Tibial artery (tissue), 4 donors: ENCODE measurements at regions of chr17 and their contacts with region 1.

Region 1: DNA sequence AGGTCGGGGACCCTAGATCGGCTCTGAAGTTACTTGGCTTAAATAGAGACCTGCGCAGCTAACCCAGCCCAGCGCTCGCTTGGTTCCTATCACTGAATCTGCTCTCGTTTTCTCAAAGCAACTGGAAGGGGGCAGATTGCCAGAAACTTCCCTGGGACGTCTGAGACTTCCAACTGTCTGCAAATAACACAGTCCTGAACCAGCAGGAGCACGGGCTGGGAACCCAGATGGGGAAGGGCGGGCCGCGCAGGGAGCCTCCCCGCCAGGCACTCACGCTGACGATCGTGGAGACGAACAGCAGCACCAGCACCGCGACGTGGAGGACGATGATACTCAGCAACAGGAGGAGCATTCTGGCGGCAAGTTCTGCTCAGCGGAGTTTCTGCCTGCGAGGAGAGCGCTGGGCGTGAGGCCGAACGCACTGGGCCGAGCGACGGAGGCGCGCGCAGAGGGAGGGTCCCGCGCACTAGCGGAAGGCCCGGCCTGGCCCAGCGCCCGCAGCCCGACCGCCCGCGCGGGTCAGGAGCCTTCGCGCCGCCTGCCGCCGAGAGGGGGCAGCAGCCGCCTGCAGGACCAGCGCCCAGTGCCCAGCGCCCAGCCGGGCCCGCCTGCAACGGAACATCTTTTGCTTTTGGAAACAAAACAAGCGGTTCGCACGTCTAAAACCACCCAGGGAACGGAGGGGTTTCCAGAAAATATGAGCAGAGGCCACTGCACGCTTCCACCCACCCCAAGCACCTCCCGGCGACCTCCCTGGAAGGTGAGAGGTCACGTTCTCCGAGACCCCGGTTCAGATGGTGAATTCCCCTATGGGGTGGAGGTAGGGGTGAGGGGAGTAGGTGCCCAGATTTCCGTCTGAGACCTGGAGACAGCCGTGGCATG is 4.5 kb downstream of the PMP22 start:
- DNase-seq: peak; percentile 87 to 94
- H3K4me3 ChIP-seq: peak overlapping the region; percentile 74 to 88
- H3K27ac ChIP-seq: peak overlapping the region; percentile 98 to 99
- H3K4me1 ChIP-seq: peaks cover 0 to 50% (median 46%) of the 10 kb centered on the region in 4 donors
- H3K27me3 ChIP-seq: no peaks in the 10 kb centered on the region
- CTCF ChIP-seq: peak; percentile 85 to 94

Region 2: DNA sequence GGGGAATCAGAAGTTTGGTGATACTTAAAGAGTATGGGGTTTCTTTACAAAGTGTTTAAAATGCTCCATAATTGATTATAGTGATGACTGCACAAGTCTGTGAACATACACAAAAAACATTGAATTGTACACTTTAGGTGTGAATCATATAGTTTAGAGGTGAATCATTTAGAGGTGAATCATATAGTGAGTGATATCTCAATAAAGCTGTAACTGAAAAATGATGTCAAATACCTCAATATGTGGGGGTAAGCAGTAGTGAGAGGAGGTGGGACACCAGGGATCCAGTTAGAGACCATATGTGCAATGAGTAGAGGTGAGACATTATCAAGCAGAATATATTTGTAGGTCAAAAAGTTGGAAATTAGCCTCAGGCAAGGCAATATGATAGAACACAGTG is 260.0 kb before region 1 on chr17:
- intact Hi-C with region 1: no loop called
- DNase-seq: no peak
- H3K4me3 ChIP-seq: no peak overlapping the region
- H3K27ac ChIP-seq: no peak overlapping the region
- H3K4me1 ChIP-seq: no peaks in the 10 kb centered on the region
- H3K27me3 ChIP-seq: no peaks in the 10 kb centered on the region
- CTCF ChIP-seq: no peak

Region 3: GRCh38 chr17:15502369-15503112 is 241.9 kb after region 1 on chr17:
- intact Hi-C with region 1: loop called (anchors 1 kb)
- DNase-seq: peak; percentile 95
- H3K4me3 ChIP-seq: peak overlapping the region; percentile 37 to 49
- H3K27ac ChIP-seq: peak overlapping the region; percentile 65 to 69
- H3K4me1 ChIP-seq: peaks cover 3 to 15% (median 8%) of the 10 kb centered on the region in 4 donors
- H3K27me3 ChIP-seq: no peaks in the 10 kb centered on the region
- CTCF ChIP-seq: peak; percentile 89 to 90

Region 4: GRCh38 chr17:15999439-16000350 is 739.1 kb after region 1 on chr17 and contains the starts of genes TTC19 and ZSWIM7:
- intact Hi-C with region 1: loop called (anchors 5 kb)
- DNase-seq: peak; percentile 94 to 97
- H3K4me3 ChIP-seq: peak within 1 kb of the TSS; percentile 77 to 88
- H3K27ac ChIP-seq: peak within 1 kb of the TSS; percentile 91 to 93
- H3K4me1 ChIP-seq: peaks cover 0 to 23% (median 15%) of the 10 kb centered on the region in 4 donors
- H3K27me3 ChIP-seq: no peaks in the 10 kb centered on the region
- CTCF ChIP-seq: no peak